Thyroid gland (tissue), 4 donors: ENCODE measurements at regions of chr13 and their contacts with region 1.

Region 1: GRCh38 chr13:61954092-61954491 is 538.4 kb upstream of the PCDH20 start:
- DNase-seq: no peak
- H3K4me3 ChIP-seq: no peak overlapping the region
- H3K27ac ChIP-seq: no peak overlapping the region
- H3K4me1 ChIP-seq: no peaks in the 10 kb centered on the region
- H3K27me3 ChIP-seq: no peaks in the 10 kb centered on the region
- CTCF ChIP-seq: peak in 4 of 6 experiments; percentile 25 to 69 (median 57)
- POLR2A ChIP-seq: no peak

Region 2: DNA sequence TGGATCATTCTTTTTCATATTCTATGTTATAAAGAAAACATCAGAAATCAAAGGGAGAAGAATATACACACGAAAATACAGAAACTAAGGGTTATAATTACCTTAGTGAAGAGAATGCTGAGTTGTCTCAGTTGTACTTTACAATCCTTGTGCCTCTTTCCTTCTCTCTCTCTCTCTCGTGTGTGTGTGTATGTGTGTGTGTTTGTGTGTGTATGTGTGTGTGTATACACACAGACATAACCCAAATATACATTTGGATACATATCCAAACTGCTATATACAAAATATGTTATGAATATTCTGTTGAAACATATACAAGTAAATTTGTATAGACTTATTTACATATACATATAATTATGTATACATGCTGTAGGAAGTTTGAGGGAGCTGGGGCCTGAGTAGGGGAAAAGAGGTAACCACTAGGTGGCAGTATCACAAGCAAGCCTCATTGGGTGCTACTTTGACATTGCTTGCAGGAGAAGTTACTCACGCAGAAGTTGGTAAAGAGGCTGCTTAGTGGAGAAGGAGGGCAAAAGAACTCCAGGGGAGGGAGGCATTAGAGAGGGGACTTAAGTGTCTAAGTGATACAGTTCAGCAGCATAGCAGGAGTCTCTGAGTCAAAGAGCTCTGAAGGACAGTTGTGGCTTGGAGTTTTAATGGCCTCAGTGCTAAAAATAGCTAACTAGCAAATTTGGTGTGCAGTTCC is 73.4 kb before region 1 on chr13:
- intact Hi-C with region 1: loop called (anchors 10 kb)
- DNase-seq: peak; percentile 38 to 41
- H3K4me3 ChIP-seq: no peak overlapping the region
- H3K27ac ChIP-seq: no peak overlapping the region
- H3K4me1 ChIP-seq: no peaks in the 10 kb centered on the region
- H3K27me3 ChIP-seq: no peaks in the 10 kb centered on the region
- CTCF ChIP-seq: peak in 5 of 6 experiments; percentile 33 to 73 (median 53)
- POLR2A ChIP-seq: no peak